ENCODE measurements at regions of chr9 and their contacts with region 1.

Region 1: DNA sequence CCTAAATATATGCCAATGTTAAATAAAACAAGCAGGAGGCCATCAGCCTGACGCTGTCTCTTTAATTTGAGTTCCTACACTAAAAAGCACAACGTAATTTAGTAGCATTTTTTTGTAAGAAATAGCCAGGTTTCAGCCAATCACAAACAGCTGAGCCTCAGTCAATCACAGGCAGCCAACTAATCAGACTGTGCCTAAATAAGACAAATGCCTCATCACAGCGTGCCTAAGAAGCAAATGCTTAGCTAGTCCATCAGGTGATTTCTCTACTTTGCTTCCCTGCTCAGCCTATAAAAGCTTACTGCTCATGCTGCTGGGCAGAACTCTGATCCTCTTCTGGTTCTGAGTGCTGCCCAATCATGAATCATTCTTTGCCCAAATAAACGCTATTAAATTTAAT is 38.3 kb upstream of the RORB start:
- DNase-seq: no peak
- ATAC-seq: no peak
- H3K4me3 ChIP-seq: no peak overlapping the region
- H3K4me3 Mint-ChIP-seq: no peak overlapping the region
- H3K27ac ChIP-seq: no peak overlapping the region
- H3K27ac Mint-ChIP-seq: no peak overlapping the region
- H3K4me1 ChIP-seq: no peaks in the 10 kb centered on the region
- H3K4me1 Mint-ChIP-seq: no peaks in the 10 kb centered on the region
- H3K27me3 ChIP-seq: no peaks in the 10 kb centered on the region
- H3K27me3 Mint-ChIP-seq: no peaks in the 10 kb centered on the region

Region 2: DNA sequence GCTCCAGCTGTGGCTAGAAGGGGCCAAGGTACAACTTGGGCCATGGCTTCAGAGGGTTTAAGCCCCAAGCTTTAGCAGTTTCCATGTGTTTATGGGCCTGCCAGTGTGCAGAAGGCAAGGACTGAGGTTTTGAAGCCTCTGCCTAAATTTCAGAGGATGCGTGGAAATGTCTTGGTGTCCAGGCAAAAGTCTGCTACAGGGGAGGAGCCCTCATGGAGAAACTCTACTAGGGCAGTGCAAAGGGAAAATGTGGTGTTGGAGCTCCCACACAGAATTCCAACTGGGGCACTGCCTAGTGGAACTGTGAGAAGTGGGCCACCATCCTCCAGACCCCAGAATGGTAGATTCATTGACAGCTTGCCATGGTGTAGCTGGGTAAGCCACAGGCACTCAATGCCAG is 488.9 kb before region 1 on chr9:
- CTCF ChIA-PET with region 1: no interaction called
- POLR2A ChIA-PET with region 1: no interaction called
- intact Hi-C with region 1: no loop called
- DNase-seq: no peak
- ATAC-seq: no peak
- H3K4me3 ChIP-seq: no peak overlapping the region
- H3K4me3 Mint-ChIP-seq: no peak overlapping the region
- H3K27ac ChIP-seq: no peak overlapping the region
- H3K27ac Mint-ChIP-seq: no peak overlapping the region
- H3K4me1 ChIP-seq: no peaks in the 10 kb centered on the region
- H3K4me1 Mint-ChIP-seq: no peaks in the 10 kb centered on the region
- H3K27me3 ChIP-seq: no peaks in the 10 kb centered on the region
- H3K27me3 Mint-ChIP-seq: no peaks in the 10 kb centered on the region

Region 3: DNA sequence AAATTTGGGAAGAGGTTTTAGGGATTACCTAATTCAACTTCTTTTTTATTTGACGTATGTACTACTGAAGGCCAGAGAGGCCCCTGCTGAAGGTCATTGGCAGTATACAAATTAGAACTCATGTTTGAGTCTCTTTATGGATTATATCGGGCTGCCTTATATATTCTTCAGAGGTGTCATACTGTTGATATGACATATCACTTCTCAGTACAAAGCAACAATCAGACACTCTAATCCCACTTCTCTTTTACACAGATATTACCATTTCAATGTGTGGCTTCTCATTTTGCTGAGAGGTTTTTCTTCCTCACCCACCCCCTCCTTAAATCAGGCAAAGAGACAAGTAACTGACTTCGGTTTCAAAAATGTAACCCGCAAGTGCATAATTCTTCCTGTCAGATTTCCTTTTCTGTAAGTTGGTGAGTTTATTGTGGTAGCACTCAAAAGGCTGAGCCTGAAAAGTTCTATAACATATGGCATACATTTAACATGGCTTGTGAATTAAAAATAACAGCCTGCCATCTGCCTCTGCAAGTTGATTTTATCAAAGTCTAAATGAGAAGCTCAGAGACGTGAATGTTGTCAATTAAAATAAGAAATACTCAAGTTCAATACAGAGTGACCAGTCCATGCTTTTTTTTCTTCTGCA is 125.3 kb before region 1 on chr9:
- CTCF ChIA-PET with region 1: no interaction called
- POLR2A ChIA-PET with region 1: no interaction called
- intact Hi-C with region 1: no loop called
- DNase-seq: peak in 1 of 9 donors; percentile 3
- ATAC-seq: peak; percentile 38
- H3K4me3 ChIP-seq: no peak overlapping the region
- H3K4me3 Mint-ChIP-seq: peak overlapping the region in 1 of 10 donors; percentile 72
- H3K27ac ChIP-seq: no peak overlapping the region
- H3K27ac Mint-ChIP-seq: peak overlapping the region in 1 of 9 donors; percentile 51
- H3K4me1 ChIP-seq: no peaks in the 10 kb centered on the region
- H3K4me1 Mint-ChIP-seq: peaks cover 0 to 21% (median 1%) of the 10 kb centered on the region in 7 donors
- H3K27me3 ChIP-seq: no peaks in the 10 kb centered on the region
- H3K27me3 Mint-ChIP-seq: peaks cover 0 to 5% (median 0%) of the 10 kb centered on the region in 5 donors

Region 4: DNA sequence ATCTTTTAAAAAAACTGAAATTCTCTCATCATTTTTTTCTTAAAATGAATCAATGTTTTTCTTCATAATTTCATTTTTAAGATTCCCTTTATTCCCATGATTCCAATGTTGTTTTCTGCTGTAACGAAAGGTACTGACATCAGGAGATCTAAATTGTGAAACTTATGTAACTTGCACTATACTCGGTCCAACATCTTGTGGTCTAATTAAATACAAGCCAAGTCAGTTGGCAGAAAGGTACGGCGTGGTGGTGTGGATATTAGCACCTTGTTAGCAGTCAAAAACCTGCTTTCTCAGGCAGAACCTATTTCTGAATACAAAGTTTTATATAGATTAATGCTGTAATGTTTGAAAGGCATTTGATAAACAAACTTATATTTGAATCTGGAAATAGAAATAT is 58.4 kb after region 1 on chr9:
- CTCF ChIA-PET with region 1: no interaction called
- POLR2A ChIA-PET with region 1: no interaction called
- intact Hi-C with region 1: loop called in 1 of 2 experiments (anchors 10 kb)
- DNase-seq: no peak
- ATAC-seq: no peak
- H3K4me3 ChIP-seq: no peak overlapping the region
- H3K4me3 Mint-ChIP-seq: no peak overlapping the region
- H3K27ac ChIP-seq: no peak overlapping the region
- H3K27ac Mint-ChIP-seq: no peak overlapping the region
- H3K4me1 ChIP-seq: no peaks in the 10 kb centered on the region
- H3K4me1 Mint-ChIP-seq: no peaks in the 10 kb centered on the region
- H3K27me3 ChIP-seq: no peaks in the 10 kb centered on the region
- H3K27me3 Mint-ChIP-seq: no peaks in the 10 kb centered on the region

Measured in naive thymus-derived CD4-positive, alpha-beta T cell (primary cell).